Sigmoid colon (tissue), 7 donors: ENCODE measurements at regions of chr15 and their contacts with region 1.

Region 1: DNA sequence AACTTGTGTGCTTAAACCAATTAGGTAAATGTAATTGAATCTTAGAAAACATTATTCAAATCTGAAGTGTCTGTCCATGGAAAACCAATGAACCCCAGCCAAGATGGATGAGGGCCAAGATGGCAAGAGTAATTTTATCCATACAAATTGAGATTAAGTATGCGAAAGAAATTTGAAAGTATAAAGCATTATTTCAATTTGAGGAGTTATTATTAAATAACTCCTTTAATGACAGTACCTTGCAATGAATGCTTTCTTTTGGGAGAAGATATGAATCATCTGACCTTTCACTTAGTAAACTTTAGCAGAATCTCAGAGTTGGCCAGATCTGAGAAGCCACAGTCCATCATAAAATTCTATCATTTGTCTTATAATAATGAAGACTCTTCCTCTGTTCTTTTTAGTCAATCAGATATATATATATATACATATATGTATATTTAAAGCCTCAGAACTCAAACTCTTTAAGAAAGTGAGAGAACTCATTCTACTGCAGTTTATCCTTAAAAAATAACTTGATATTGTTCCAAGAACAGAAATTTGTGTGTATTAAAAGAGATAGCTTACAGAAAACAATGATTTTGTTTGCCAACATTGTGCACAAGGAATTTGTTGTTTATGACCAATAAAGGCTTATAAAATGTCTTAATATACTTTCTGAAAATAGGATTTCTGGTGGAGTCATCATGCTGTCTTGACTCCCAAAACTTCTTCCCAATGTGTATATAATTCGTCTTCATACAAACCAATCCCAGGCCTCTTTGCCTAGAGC is 434.8 kb upstream of the THBS1 start:
- DNase-seq: no peak
- H3K4me3 ChIP-seq: no peak overlapping the region
- H3K27ac ChIP-seq: peak overlapping the region in 2 of 4 donors; percentile 2 to 36
- H3K4me1 ChIP-seq: peaks cover 0 to 33% (median 27%) of the 10 kb centered on the region in 4 donors
- H3K27me3 ChIP-seq: no peaks in the 10 kb centered on the region
- CTCF ChIP-seq: no peak
- EP300 ChIP-seq: no peak
- POLR2A ChIP-seq: no peak

Region 2: DNA sequence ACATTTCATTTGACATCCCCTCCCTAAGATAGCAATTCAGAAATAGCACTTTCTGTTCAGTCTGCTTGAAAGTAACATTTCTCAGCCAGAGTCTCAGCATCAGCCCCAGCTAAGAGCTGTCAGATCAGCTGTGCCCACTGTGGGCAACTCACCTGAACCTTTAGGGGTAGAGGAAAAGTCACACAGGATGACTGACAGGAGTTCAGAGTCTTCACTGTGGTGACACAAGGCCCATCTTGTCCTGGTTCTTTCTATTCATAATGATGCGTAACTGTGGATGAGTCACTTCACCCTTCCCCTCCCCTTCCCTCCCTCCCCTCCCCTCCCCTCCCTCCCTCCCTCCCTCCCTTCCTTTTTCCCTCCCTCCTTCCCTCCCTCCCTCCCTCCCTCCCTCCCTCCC is 485.3 kb before region 1 on chr15:
- intact Hi-C with region 1: no loop called
- DNase-seq: no peak
- H3K4me3 ChIP-seq: no peak overlapping the region
- H3K27ac ChIP-seq: no peak overlapping the region
- H3K4me1 ChIP-seq: no peaks in the 10 kb centered on the region
- H3K27me3 ChIP-seq: no peaks in the 10 kb centered on the region
- CTCF ChIP-seq: no peak
- EP300 ChIP-seq: no peak
- POLR2A ChIP-seq: no peak

Region 3: GRCh38 chr15:38868326-38869114 is 277.5 kb before region 1 on chr15:
- intact Hi-C with region 1: no loop called
- DNase-seq: peak; percentile 78
- H3K4me3 ChIP-seq: no peak overlapping the region
- H3K27ac ChIP-seq: no peak overlapping the region
- H3K4me1 ChIP-seq: peaks cover 0 to 5% (median 0%) of the 10 kb centered on the region in 4 donors
- H3K27me3 ChIP-seq: no peaks in the 10 kb centered on the region
- CTCF ChIP-seq: no peak
- EP300 ChIP-seq: no peak
- POLR2A ChIP-seq: no peak

Region 4: GRCh38 chr15:38991126-38991525 is 154.9 kb before region 1 on chr15:
- intact Hi-C with region 1: no loop called
- DNase-seq: no peak
- H3K4me3 ChIP-seq: no peak overlapping the region
- H3K27ac ChIP-seq: no peak overlapping the region
- H3K4me1 ChIP-seq: peaks cover 0 to 26% (median 12%) of the 10 kb centered on the region in 4 donors
- H3K27me3 ChIP-seq: no peaks in the 10 kb centered on the region
- CTCF ChIP-seq: peak in 1 of 4 experiments; percentile 28
- EP300 ChIP-seq: no peak
- POLR2A ChIP-seq: no peak

Region 5: GRCh38 chr15:39009740-39010139 is 136.3 kb before region 1 on chr15:
- intact Hi-C with region 1: no loop called
- DNase-seq: no peak
- H3K4me3 ChIP-seq: no peak overlapping the region
- H3K27ac ChIP-seq: no peak overlapping the region
- H3K4me1 ChIP-seq: no peaks in the 10 kb centered on the region
- H3K27me3 ChIP-seq: no peaks in the 10 kb centered on the region
- CTCF ChIP-seq: no peak
- EP300 ChIP-seq: no peak
- POLR2A ChIP-seq: no peak

Region 6: DNA sequence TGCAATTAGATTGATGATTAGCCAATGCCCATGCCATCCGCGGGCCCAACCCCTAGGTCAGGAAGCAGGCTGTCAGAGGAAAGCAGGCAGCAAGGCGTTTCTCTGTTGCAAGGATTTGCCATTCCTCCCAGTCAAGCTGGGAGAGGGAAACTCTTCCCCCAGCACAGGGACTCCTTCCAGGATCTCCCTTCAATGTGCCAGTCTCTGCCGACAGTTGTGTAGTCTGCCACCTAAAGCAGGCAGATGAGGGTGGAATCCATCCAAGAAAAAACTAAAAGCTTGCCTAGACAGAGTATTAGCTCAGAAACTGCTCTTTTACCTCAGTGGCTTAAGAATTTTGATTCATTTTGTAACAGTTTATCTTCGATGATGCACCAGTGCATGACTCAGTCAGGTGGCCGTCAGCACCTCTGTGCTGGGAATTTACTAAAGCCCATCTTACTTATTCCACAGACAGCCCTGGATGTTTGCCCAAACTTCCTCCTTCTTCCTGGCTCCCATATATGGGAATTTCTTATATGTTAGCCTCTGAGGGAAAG is 66.7 kb before region 1 on chr15:
- intact Hi-C with region 1: loop called (anchors 5 kb)
- DNase-seq: no peak
- H3K4me3 ChIP-seq: no peak overlapping the region
- H3K27ac ChIP-seq: peak overlapping the region in 2 of 4 donors; percentile 7 to 53
- H3K4me1 ChIP-seq: peaks cover 0 to 37% (median 19%) of the 10 kb centered on the region in 4 donors
- H3K27me3 ChIP-seq: no peaks in the 10 kb centered on the region
- CTCF ChIP-seq: no peak
- EP300 ChIP-seq: no peak
- POLR2A ChIP-seq: no peak